HepG2 (cell line): ENCODE measurements at regions of chr16 and their contacts with region 1.

Region 1: GRCh38 chr16:30355144-30355894 is at the start of gene CD2BP2:
- DNase-seq: peak; percentile 100
- ATAC-seq: peak; percentile 82
- H3K4me3 ChIP-seq: peak within 1 kb of the TSS; percentile 85 to 94 (median 88)
- H3K27ac ChIP-seq: peak within 1 kb of the TSS; percentile 92
- H3K4me1 ChIP-seq: peaks cover 58% of the 10 kb centered on the region
- H3K27me3 ChIP-seq: no peaks in the 10 kb centered on the region; a peak in 1 of 5 replicates
- CTCF ChIP-seq: peak; percentile 45
- EP300 ChIP-seq: peak; percentile 14 to 37; a peak in 1 of 4 replicates
- POLR2A ChIP-seq: peak; percentile 58 to 60; a peak in 2 of 4 replicates
- RAD21 ChIP-seq: peak; percentile 55; the same call in 1 of the 2 replicates
- total RNA-seq, gene CD2BP2: 54.6 and 69.9 TPM in 2 replicates

Region 2: DNA sequence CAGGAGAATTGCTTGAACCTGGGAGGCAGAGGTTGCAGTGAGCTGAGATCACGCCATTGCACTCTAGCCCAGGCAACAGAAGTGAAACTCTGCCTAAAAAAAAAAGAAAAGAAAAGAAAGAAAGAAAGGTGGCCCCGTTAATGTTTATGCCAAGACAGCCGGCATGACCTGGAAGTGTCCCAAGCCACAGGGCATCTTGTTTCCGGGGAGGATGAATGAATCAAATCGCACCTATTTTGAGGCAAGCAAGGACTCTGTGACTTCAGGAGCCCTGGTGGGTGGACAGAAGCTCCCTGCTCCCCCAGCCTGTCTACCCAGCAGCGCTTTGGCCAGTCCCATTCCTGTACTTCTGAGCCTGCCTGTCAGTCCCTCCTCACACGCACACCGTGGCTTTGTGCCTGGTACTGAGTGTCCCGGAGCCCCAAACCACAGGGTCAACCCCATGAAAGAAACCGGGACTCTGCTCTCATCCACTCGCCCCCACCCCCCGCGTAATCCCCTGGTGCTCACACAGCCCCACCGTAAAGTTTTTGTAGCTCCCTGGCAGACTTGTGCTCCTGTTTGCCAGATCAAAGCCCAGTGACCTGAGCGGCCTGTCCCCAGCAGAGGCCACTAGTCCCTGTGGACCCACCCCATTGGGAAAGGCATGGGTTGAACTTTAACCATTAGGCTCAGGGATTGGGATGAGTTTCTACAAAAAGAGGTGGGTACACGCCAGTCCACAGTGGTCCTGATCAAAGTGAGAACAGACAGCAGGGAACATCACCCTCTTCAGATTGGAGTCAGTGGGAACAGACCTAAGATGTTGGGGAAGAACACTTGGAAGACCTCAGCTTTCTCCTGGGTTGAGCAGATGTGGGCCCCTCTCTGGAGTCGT is 19.5 kb before region 1 on chr16:
- CTCF ChIA-PET with region 1: interaction called, 3 read pairs
- POLR2A ChIA-PET with region 1: interaction called, 33 read pairs
- in situ Hi-C with region 1: no loop called
- intact Hi-C with region 1: loop called (anchors 2 kb)
- DNase-seq: peak; percentile 96
- ATAC-seq: peak; percentile 80
- H3K4me3 ChIP-seq: peak overlapping the region; percentile 68 to 95 (median 94)
- H3K27ac ChIP-seq: peak overlapping the region; percentile 99
- H3K4me1 ChIP-seq: peaks cover 51% of the 10 kb centered on the region
- H3K27me3 ChIP-seq: no peaks in the 10 kb centered on the region
- CTCF ChIP-seq: peak; percentile 56
- EP300 ChIP-seq: peak; percentile 71 to 73; a peak in 3 of 4 replicates
- POLR2A ChIP-seq: peak; percentile 76 to 84
- RAD21 ChIP-seq: no peak

Region 3: GRCh38 chr16:30370444-30371247 is 15.3 kb after region 1 on chr16 and contains the start of gene TBC1D10B:
- CTCF ChIA-PET with region 1: no interaction called
- POLR2A ChIA-PET with region 1: interaction called, 94 read pairs
- in situ Hi-C with region 1: no loop called
- intact Hi-C with region 1: no loop called
- DNase-seq: peak; percentile 100
- ATAC-seq: peak; percentile 88
- H3K4me3 ChIP-seq: peak within 1 kb of the TSS; percentile 80 to 90 (median 86)
- H3K27ac ChIP-seq: peak within 1 kb of the TSS; percentile 51
- H3K4me1 ChIP-seq: peaks cover 45% of the 10 kb centered on the region
- H3K27me3 ChIP-seq: no peaks in the 10 kb centered on the region; a peak in 1 of 5 replicates
- CTCF ChIP-seq: peak; percentile 75
- EP300 ChIP-seq: no peak
- POLR2A ChIP-seq: peak; percentile 40 to 77; a peak in 2 of 4 replicates
- RAD21 ChIP-seq: peak; percentile 71; the same call in 1 of the 2 replicates
- total RNA-seq, gene TBC1D10B: 20.8 and 24.8 TPM in 2 replicates

Region 4: DNA sequence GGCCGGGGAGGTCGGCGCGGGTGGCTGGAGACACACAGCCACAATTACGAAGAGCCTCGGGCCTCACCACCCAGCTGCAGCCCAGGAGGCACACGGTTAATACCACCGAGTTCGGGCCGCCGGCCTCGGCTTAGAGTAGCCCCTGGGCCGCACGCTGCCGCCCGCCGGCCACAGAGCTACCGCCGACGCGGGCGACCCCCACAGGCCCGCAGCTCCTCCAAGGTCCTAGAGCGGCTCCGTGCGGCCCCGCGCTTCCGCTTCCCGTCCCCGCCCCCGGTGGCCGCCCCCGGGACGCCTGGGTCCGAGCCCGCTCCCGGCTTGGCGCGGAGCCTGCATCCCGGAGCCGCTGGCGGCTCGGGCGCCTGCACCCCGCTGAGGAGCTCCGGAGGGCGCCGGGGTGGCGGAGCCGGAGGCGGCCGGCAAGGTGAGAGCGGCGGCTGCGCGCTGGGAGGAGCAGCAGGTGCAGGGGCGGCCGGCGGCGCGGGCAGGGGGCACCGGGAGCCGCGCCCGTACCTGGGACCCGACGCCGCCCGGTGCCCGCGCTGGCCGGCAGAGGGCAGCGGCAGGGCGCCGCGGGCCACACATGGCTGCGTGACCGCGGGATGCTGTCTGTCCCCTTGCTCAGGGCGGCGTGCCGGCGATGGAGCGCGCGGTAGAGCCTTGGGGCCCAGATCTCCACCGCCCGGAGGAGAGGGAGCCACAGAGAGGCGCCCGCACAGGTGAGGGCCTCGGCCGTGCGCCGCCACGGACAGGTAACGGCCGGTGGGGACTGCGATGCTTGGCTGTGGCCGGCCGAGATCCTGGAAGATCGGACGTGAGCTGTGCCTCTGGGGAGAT is 40.1 kb after region 1 on chr16 and contains the start of gene ZNF48:
- CTCF ChIA-PET with region 1: no interaction called
- POLR2A ChIA-PET with region 1: interaction called, 14 read pairs
- in situ Hi-C with region 1: no loop called
- intact Hi-C with region 1: loop called (anchors 1 kb)
- DNase-seq: peak; percentile 89
- ATAC-seq: peak; percentile 94
- H3K4me3 ChIP-seq: peak within 1 kb of the TSS; percentile 75 to 93 (median 75)
- H3K27ac ChIP-seq: peak within 1 kb of the TSS; percentile 73
- H3K4me1 ChIP-seq: peaks cover 36% of the 10 kb centered on the region
- H3K27me3 ChIP-seq: no peaks in the 10 kb centered on the region
- CTCF ChIP-seq: peak; percentile 78
- EP300 ChIP-seq: 0 out of 4 replicates have a peak, but pooled peaks of 1 of the 2 experiments have one; percentile 19
- POLR2A ChIP-seq: peak in 1 of 2 experiments; percentile 70; a peak in 3 of 4 replicates
- RAD21 ChIP-seq: peak; percentile 92
- total RNA-seq, gene ZNF48: 10.9 and 12.3 TPM in 2 replicates

Region 5: GRCh38 chr16:30401768-30402425 is 46.6 kb after region 1 on chr16:
- CTCF ChIA-PET with region 1: no interaction called
- POLR2A ChIA-PET with region 1: interaction called, 36 read pairs
- in situ Hi-C with region 1: no loop called
- intact Hi-C with region 1: no loop called
- DNase-seq: peak; percentile 97
- ATAC-seq: peak; percentile 77
- H3K4me3 ChIP-seq: peak overlapping the region in 1 of 3 experiments; percentile 3; a peak in 2 of 6 replicates
- H3K27ac ChIP-seq: peak overlapping the region; percentile 87
- H3K4me1 ChIP-seq: peaks cover 46% of the 10 kb centered on the region
- H3K27me3 ChIP-seq: no peaks in the 10 kb centered on the region
- CTCF ChIP-seq: no peak
- EP300 ChIP-seq: peak; percentile 33 to 77; a peak in 2 of 4 replicates
- POLR2A ChIP-seq: peak; percentile 40 to 71; a peak in 3 of 4 replicates
- RAD21 ChIP-seq: peak; percentile 54; the same call in 1 of the 2 replicates

Region 6: DNA sequence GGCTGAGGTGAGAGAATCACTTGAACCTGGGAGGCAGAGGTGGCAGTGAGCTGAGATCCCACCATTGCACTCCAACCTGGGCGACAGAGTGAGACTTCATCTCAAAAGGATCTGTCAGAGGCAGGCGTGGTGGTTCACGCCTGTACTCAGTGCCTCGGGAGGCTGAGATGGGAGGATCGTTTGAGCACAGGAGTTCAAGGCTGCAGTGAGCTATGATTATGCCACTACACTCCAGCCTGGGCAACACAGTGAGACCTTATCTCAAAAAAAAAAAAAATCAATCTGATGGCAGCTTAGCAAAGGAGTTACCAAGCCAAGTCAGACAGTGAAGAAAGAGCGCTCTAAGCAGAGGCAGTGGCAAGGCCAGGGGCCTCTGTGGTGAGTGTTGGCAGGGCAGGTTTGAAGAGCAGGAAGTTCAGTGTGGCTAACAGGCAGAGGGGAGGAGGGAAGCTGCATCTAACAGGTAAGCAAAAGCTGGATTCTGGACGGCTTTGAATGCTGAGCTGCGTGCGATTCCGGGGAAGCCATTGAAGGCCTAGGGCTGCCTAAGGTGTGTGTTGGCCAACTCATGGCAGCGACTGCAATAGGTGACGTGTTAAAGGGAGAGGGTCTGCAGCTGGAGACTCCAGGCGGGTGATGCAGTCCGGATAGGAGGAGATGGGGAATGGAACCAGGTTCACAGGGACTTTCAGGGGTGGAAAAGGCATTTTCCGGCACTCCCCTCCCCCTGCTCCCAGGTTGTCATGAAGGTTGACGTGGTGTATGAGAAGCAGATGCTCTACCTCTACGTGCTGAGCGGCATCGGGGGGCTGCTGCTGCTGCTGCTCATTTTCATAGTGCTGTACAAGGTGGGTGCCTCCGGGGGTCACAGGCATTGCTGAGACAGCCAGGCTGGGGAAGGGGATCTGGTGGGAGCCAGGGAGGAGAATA is 164.1 kb after region 1 on chr16:
- CTCF ChIA-PET with region 1: no interaction called
- POLR2A ChIA-PET with region 1: no interaction called
- in situ Hi-C with region 1: no loop called
- intact Hi-C with region 1: no loop called
- DNase-seq: no peak
- ATAC-seq: peak; percentile 13
- H3K4me3 ChIP-seq: no peak overlapping the region
- H3K27ac ChIP-seq: no peak overlapping the region
- H3K4me1 ChIP-seq: peaks cover 54% of the 10 kb centered on the region
- H3K27me3 ChIP-seq: no peaks in the 10 kb centered on the region
- CTCF ChIP-seq: no peak
- EP300 ChIP-seq: no peak
- POLR2A ChIP-seq: no peak
- RAD21 ChIP-seq: no peak

Region 7: GRCh38 chr16:30609926-30610839 is 254.9 kb after region 1 on chr16 and contains the start of gene ZNF689:
- CTCF ChIA-PET with region 1: no interaction called
- POLR2A ChIA-PET with region 1: interaction called, 5 read pairs
- in situ Hi-C with region 1: loop called (anchors 10 kb)
- intact Hi-C with region 1: no loop called
- DNase-seq: peak; percentile 98
- ATAC-seq: peak; percentile 92
- H3K4me3 ChIP-seq: peak within 1 kb of the TSS; percentile 80 to 96 (median 92)
- H3K27ac ChIP-seq: peak within 1 kb of the TSS; percentile 92
- H3K4me1 ChIP-seq: peaks cover 37% of the 10 kb centered on the region
- H3K27me3 ChIP-seq: no peaks in the 10 kb centered on the region; a peak in 1 of 5 replicates
- CTCF ChIP-seq: peak; percentile 21; the same call in 1 of the 2 replicates
- EP300 ChIP-seq: peak; percentile 26 to 33; a peak in 1 of 4 replicates
- POLR2A ChIP-seq: peak; percentile 84 to 96
- RAD21 ChIP-seq: no peak; the same call in 1 of the 2 replicates
- total RNA-seq, gene ZNF689: 19.5 and 22.7 TPM in 2 replicates